MCF 10A (cell line): ENCODE measurements at regions of chr5 and their contacts with region 1.

Region 1: GRCh38 chr5:36305571-36306326 is 4.0 kb upstream of the RANBP3L start:
- DNase-seq: peak; percentile 65
- H3K4me3 Mint-ChIP-seq: no peak overlapping the region
- H3K27ac Mint-ChIP-seq: peak overlapping the region; percentile 47
- H3K4me1 Mint-ChIP-seq: peaks cover 11% of the 10 kb centered on the region
- H3K27me3 Mint-ChIP-seq: peaks cover 27% of the 10 kb centered on the region
- CTCF ChIP-seq: peak; percentile 49

Region 2: GRCh38 chr5:36397901-36398536 is 92.3 kb after region 1 on chr5:
- CTCF ChIA-PET with region 1: interaction called, 4 read pairs
- POLR2A ChIA-PET with region 1: no interaction called
- intact Hi-C with region 1: loop called (anchors 5 kb)
- DNase-seq: peak; percentile 47
- H3K4me3 Mint-ChIP-seq: no peak overlapping the region
- H3K27ac Mint-ChIP-seq: no peak overlapping the region
- H3K4me1 Mint-ChIP-seq: peaks cover 5% of the 10 kb centered on the region
- H3K27me3 Mint-ChIP-seq: no peaks in the 10 kb centered on the region
- CTCF ChIP-seq: peak; percentile 47